ENCODE measurements at regions of chr3 and their contacts with region 1.

Region 1: DNA sequence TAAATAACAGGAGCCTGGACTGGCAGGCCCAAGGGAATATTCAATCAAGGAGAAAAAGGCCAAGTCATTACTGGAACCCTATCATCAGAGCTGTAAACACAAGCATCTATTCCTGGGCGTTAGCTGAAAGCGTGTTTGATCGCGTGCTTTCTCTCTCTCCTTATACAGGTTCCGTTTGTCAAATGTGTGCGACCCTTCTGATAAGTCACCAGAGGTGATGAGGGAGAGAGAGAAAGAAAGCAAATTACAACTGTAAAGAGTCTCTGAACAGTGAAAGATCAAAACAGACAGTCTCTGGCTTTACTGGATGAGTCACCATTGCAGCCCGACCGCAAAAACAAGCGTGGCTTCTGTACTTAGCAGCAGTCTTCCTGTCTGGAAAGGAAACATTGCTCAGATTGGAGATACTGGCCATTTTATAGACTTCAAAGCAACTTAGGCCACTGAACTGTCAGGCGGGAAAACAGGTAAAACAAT is 39.5 kb upstream of the TPRG1 start:
- DNase-seq: peak in 8 of 9 donors; percentile 20 to 76 (median 62)
- ATAC-seq: peak; percentile 96
- H3K4me3 ChIP-seq: peak overlapping the region; percentile 26
- H3K4me3 Mint-ChIP-seq: peak overlapping the region; percentile 39 to 83 (median 71)
- H3K27ac ChIP-seq: peak overlapping the region; percentile 22
- H3K27ac Mint-ChIP-seq: peak overlapping the region; percentile 43 to 98 (median 79)
- H3K4me1 ChIP-seq: peaks cover 13 to 34% of the 10 kb centered on the region in 2 donors
- H3K4me1 Mint-ChIP-seq: peaks cover 13 to 38% (median 23%) of the 10 kb centered on the region in 7 donors
- H3K27me3 ChIP-seq: no peaks in the 10 kb centered on the region
- H3K27me3 Mint-ChIP-seq: no peaks in the 10 kb centered on the region

Region 2: GRCh38 chr3:187368251-187369088 is 1763.8 kb before region 1 on chr3 and contains the start of gene RTP4:
- CTCF ChIA-PET with region 1: no interaction called
- POLR2A ChIA-PET with region 1: interaction called, 3 read pairs
- intact Hi-C with region 1: loop called (anchors 1 to 5 kb)
- DNase-seq: peak in 8 of 9 donors; percentile 25 to 70 (median 55)
- ATAC-seq: peak; percentile 86
- H3K4me3 ChIP-seq: peak within 1 kb of the TSS; percentile 85
- H3K4me3 Mint-ChIP-seq: peak within 1 kb of the TSS; percentile 89 to 100 (median 98)
- H3K27ac ChIP-seq: peak within 1 kb of the TSS; percentile 78
- H3K27ac Mint-ChIP-seq: peak within 1 kb of the TSS; percentile 94 to 100 (median 98)
- H3K4me1 ChIP-seq: peaks cover 9 to 13% of the 10 kb centered on the region in 2 donors
- H3K4me1 Mint-ChIP-seq: peaks cover 22 to 42% (median 29%) of the 10 kb centered on the region in 7 donors
- H3K27me3 ChIP-seq: no peaks in the 10 kb centered on the region
- H3K27me3 Mint-ChIP-seq: no peaks in the 10 kb centered on the region
- total RNA-seq, gene RTP4: 1.6 to 23.1 (median 5.5) TPM

Region 3: DNA sequence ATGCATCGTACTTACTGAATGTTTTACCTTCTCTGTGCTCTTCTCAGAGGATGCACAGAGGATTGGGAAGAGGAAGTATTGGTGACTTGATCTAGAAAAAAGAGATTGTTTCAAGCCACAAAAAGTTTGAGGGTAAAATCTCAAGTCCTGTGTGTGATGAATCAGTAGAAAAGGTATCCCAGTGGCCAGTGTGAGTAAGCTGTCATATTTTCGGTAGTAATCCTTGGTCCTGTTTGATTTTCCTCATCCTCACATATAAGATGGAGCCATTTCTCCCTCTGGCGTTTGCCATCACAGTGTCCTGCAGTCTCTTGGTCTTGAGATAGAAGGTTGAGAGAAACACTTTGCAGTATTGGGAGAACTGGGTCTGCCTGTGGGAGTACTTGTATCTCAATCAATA is 811.5 kb before region 1 on chr3:
- CTCF ChIA-PET with region 1: no interaction called
- POLR2A ChIA-PET with region 1: no interaction called
- intact Hi-C with region 1: loop called in 1 of 2 experiments (anchors 2 kb)
- DNase-seq: no peak
- ATAC-seq: no peak
- H3K4me3 ChIP-seq: no peak overlapping the region
- H3K4me3 Mint-ChIP-seq: peak overlapping the region in 1 of 10 donors; percentile 37
- H3K27ac ChIP-seq: no peak overlapping the region
- H3K27ac Mint-ChIP-seq: peak overlapping the region in 2 of 9 donors; percentile 11 to 59
- H3K4me1 ChIP-seq: peaks cover 19 to 26% of the 10 kb centered on the region in 2 donors
- H3K4me1 Mint-ChIP-seq: peaks cover 34 to 67% (median 55%) of the 10 kb centered on the region in 7 donors
- H3K27me3 ChIP-seq: no peaks in the 10 kb centered on the region
- H3K27me3 Mint-ChIP-seq: peaks cover 0 to 6% (median 0%) of the 10 kb centered on the region in 5 donors

Region 4: DNA sequence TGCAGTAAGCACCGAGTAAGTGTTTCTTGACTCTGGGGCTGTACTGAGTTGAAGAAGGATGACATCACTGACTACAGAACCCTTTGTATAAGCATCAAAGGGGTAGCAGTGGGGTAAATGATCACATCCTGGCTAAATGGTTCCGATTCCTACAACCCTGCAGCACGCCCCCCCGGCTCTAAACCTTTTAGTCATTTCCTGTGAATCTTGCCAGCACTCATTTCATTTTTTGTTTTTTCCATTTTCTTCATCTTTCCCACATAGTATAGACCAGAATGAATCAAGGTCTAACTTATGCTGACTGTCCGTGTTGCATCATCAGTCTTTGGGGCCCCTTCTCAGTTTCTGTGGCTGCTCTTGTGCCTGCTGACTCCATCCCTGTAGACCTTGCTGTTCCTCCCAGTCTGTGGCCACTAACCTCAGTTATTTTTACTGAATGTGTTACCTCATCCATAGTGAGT is 343.6 kb before region 1 on chr3:
- CTCF ChIA-PET with region 1: no interaction called
- POLR2A ChIA-PET with region 1: no interaction called
- intact Hi-C with region 1: loop called in 1 of 2 experiments (anchors 1 kb)
- DNase-seq: peak in 8 of 9 donors; percentile 33 to 77 (median 64)
- ATAC-seq: peak; percentile 94
- H3K4me3 ChIP-seq: no peak overlapping the region
- H3K4me3 Mint-ChIP-seq: no peak overlapping the region
- H3K27ac ChIP-seq: no peak overlapping the region
- H3K27ac Mint-ChIP-seq: no peak overlapping the region
- H3K4me1 ChIP-seq: peaks cover 9 to 14% of the 10 kb centered on the region in 2 donors
- H3K4me1 Mint-ChIP-seq: peaks cover 0 to 10% (median 0%) of the 10 kb centered on the region in 7 donors
- H3K27me3 ChIP-seq: no peaks in the 10 kb centered on the region
- H3K27me3 Mint-ChIP-seq: no peaks in the 10 kb centered on the region

Region 5: DNA sequence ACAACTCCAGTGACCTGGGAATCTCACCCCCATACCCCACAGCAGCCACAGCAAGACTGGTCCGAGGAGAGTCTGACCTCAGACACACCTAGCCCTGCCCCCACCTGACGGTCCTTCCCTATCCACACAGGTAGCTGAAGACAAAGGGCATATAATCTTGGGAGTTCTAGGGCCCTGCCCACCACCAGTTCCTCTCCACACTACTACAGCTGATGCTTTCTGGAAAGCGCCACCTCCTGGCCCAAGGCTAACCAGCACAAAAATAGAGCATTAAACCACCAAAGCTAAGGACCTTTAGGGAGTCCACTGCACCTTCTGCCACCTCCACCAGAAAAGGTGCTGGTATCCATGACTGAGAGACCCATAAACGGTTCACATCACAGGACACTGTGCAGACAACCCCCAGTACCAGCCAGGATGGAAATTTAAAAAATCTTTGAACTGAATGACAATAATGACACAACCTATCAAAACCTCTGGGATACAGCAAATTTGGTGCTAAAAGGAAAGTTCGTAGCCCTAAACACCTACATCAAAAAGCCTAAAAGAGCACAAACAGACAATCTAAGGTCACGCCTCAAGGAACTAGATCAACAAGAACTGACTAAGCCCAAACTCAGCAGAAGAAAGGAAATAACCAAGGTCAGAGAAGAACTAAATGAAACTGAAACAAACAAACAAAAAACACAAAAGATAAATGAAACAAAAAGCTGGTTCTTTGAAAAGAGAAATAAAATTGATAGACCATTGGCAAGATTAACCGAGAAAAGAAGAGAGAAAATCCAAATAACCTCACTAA is 82.6 kb before region 1 on chr3:
- CTCF ChIA-PET with region 1: no interaction called
- POLR2A ChIA-PET with region 1: no interaction called
- intact Hi-C with region 1: loop called in 1 of 2 experiments (anchors 1 kb)
- DNase-seq: peak in 2 of 9 donors; percentile 4 to 5
- ATAC-seq: no peak
- H3K4me3 ChIP-seq: no peak overlapping the region
- H3K4me3 Mint-ChIP-seq: peak overlapping the region in 1 of 10 donors; percentile 69
- H3K27ac ChIP-seq: no peak overlapping the region
- H3K27ac Mint-ChIP-seq: peak overlapping the region in 1 of 9 donors; percentile 88
- H3K4me1 ChIP-seq: peaks cover 0 to 13% of the 10 kb centered on the region in 2 donors
- H3K4me1 Mint-ChIP-seq: peaks cover 3 to 61% (median 6%) of the 10 kb centered on the region in 7 donors
- H3K27me3 ChIP-seq: no peaks in the 10 kb centered on the region
- H3K27me3 Mint-ChIP-seq: peaks cover 3 to 35% (median 25%) of the 10 kb centered on the region in 5 donors

Region 6: GRCh38 chr3:189160536-189161269 is 28.4 kb after region 1 on chr3:
- CTCF ChIA-PET with region 1: no interaction called
- POLR2A ChIA-PET with region 1: no interaction called
- intact Hi-C with region 1: no loop called
- DNase-seq: no peak
- ATAC-seq: no peak
- H3K4me3 ChIP-seq: no peak overlapping the region
- H3K4me3 Mint-ChIP-seq: no peak overlapping the region
- H3K27ac ChIP-seq: no peak overlapping the region
- H3K27ac Mint-ChIP-seq: no peak overlapping the region
- H3K4me1 ChIP-seq: no peaks in the 10 kb centered on the region
- H3K4me1 Mint-ChIP-seq: peaks cover 0 to 5% (median 0%) of the 10 kb centered on the region in 7 donors
- H3K27me3 ChIP-seq: no peaks in the 10 kb centered on the region
- H3K27me3 Mint-ChIP-seq: peaks cover 0 to 23% (median 0%) of the 10 kb centered on the region in 5 donors

Region 7: GRCh38 chr3:189324538-189325138 is 192.4 kb after region 1 on chr3:
- CTCF ChIA-PET with region 1: no interaction called
- POLR2A ChIA-PET with region 1: no interaction called
- intact Hi-C with region 1: loop called (anchors 2 to 5 kb)
- DNase-seq: peak; percentile 15 to 96 (median 94)
- ATAC-seq: peak; percentile 98
- H3K4me3 ChIP-seq: peak overlapping the region; percentile 21
- H3K4me3 Mint-ChIP-seq: peak overlapping the region; percentile 72 to 87 (median 82)
- H3K27ac ChIP-seq: peak overlapping the region; percentile 51
- H3K27ac Mint-ChIP-seq: peak overlapping the region; percentile 86 to 100 (median 94)
- H3K4me1 ChIP-seq: peaks cover 33 to 46% of the 10 kb centered on the region in 2 donors
- H3K4me1 Mint-ChIP-seq: peaks cover 27 to 80% (median 73%) of the 10 kb centered on the region in 7 donors
- H3K27me3 ChIP-seq: no peaks in the 10 kb centered on the region
- H3K27me3 Mint-ChIP-seq: peaks cover 0 to 4% (median 0%) of the 10 kb centered on the region in 5 donors